Right ventricle myocardium superior (tissue), 1 donor: ENCODE measurements at regions of chr2 and their contacts with region 1.

Region 1: GRCh38 chr2:168346725-168347477 is 99.5 kb upstream of the STK39 start:
- DNase-seq: peak; percentile 57
- ATAC-seq: peak; percentile 90

Region 2: DNA sequence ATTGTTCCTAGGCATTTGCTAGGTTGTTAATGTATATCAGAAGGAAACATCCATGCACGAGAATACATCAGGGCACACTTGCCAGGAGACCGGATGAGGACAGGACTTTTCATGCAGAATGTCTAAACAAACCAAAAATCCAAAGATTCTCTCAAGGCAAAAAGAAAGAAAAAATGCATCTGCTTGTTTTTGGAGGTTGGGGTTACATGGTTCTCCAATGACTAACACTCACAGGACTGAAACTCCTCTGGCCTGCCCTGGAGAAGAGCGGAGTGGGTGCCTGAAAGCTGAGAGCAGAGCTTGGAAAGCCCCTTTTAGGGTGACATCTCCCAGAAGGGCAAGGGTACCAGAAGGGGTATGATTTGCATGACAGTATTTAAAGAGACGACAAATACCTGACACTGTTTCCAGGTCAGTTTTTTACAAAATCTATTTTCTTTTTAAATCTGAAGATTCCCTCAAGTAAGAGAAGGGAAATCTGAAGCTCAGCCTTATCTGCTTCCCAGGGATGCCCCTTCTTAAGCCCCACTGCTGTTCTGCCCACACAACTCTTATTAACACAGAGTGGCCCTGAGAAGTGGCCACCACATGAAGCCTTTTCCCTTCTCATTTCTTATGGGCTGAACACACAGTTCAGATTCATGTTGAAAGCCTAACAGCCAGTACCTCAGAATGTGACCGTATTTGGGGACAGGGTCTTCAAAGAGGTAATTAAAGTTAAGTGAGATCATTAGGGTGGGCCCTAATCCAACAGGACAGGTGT is 315.9 kb before region 1 on chr2:
- intact Hi-C with region 1: no loop called
- DNase-seq: no peak
- ATAC-seq: no peak

Region 3: GRCh38 chr2:168699844-168700417 is 353.0 kb after region 1 on chr2:
- intact Hi-C with region 1: loop called (anchors 10 kb)
- DNase-seq: peak; percentile 86
- ATAC-seq: peak; percentile 75

Region 4: DNA sequence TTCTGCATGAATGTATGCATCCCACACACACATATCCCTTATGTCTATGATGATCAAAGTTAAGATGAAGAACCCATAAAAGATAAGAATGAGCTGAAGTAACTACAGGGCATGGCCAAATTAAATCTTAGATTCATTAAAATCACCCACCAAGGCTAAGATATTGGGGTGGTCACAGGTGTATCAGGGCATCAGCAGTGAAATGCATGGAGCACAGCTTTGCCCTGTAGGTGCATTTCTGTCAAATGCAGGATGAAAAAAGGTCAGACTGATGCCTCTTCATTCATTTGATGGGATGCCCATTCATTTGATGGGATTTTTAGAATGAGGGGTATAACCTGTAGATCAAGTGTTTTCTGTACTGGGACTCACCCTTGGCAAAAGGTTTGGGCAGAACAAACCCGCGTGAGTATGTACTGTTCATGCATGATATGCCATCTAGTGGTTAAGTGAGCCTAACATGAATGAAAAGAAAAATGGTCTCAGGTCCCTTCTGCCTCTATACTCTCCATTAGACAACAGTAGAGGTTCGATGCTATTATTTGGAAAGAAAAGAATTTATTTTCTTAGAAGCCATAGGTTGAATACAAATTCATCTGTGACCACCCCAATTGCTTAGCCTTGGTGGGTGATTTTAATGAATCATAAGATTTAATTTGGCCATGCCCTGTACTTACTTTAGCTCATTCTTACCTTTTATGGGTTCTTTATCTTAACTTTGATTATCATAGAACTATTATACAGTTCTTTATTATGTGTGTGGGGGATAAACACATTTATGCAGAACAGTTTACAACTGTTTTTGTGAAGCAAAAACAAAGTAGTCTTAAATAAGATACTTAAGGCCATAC is 412.3 kb after region 1 on chr2:
- intact Hi-C with region 1: loop called (anchors 5 kb)
- DNase-seq: no peak
- ATAC-seq: peak; percentile 69

Region 5: DNA sequence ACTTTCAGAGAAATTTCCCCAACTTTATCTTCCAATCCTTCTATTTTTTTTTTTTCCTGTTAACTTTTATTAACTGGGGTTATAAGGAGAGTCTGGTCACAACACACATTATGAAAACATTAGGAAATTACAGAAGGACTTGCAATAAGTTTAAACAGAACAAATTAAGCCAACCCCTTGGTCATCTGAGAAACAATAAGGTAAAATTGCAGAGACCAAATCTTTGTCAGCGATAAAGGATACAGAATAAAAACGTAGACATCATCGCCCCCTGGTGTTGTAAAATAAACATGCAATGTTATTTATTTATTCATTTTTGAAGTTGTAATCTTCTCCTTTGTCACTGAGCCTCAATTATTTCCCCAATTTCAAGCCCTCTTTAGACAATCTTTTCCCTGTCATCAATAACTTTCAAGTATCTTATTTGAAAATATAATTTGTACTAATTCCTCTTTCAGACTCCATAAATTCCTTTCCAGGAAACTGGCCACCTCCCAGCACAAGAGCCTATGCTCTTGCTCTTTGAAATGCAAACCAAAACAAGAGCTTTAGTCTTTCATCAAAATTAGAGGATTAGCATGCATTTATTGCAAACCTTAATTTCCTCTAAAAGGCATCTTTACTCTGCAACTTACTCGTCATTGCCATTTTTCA is 573.7 kb after region 1 on chr2:
- intact Hi-C with region 1: loop called (anchors 5 kb)
- DNase-seq: no peak
- ATAC-seq: no peak

Region 6: DNA sequence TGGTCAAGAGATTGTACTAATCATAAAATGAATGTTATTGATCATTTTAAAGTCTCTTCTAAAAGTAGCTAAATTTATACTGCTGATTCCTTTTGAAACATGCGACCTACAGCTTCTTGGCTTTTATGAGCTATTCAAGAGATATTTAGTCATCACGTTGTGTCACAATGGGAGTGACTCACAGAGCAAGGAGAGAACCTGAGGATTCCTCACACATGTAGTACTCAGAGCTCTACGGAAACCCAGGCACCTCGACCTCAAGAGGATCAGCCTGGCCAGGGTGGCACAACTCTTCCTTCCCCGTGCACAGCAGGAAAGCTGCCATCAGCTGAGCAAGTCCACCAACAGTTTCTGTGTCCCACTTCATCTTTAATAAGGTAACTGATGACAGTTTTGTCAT is 722.4 kb after region 1 on chr2 and contains the start of gene DHRS9:
- intact Hi-C with region 1: no loop called
- DNase-seq: no peak
- ATAC-seq: no peak
- total RNA-seq, gene DHRS9: 1.3 TPM